Activated B cell treated with CpG ODN at 0.5 μM for 24 hours (primary cell): ENCODE measurements at regions of chr6 and their contacts with region 1.

Region 1: GRCh38 chr6:156890627-156891314 is 113.6 kb downstream of the ARID1B start:
- DNase-seq: no peak
- ATAC-seq: no peak
- H3K4me3 Mint-ChIP-seq: no peak overlapping the region
- H3K27ac Mint-ChIP-seq: no peak overlapping the region
- H3K4me1 Mint-ChIP-seq: peaks cover 68% of the 10 kb centered on the region
- H3K27me3 Mint-ChIP-seq: no peaks in the 10 kb centered on the region
- CTCF ChIP-seq: no peak

Region 2: DNA sequence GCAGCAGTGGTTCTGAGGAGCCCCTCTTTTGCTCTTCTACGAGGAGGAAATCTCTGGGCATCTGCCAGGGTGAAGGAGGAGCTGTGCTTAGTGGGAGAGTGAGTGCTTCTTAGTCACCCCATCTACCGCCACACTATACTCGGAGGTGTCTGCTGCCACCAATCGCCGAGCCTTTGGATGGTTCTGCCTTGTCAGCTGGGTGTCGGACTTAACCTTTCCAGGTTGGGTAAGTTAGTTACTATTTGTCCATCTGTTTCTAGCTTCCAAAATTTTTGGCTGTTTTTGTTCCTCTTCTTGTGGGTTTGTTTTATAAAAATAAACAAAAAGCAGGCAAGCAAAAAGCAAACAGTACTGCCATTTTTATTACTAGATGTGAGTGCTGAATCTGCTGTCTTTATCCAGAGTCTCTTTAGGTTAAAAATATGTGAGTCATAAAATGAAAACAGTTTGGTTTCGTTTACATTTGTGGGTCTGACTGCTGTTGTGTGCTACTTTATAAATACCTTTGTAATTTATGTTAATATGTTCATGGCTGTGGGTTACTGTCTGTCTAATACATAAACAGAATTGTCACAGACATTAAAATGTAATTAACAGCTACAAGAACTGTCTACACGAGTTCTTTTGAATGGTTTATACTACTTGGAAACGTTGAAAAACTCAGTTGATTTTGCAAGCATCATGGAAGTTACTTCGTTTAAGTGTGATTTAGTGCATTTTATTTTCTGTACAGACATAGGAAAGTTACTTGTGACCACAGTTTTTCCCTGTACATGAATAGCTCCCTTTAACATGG is 24.4 kb before region 1 on chr6:
- CTCF ChIA-PET with region 1: no interaction called
- POLR2A ChIA-PET with region 1: no interaction called
- intact Hi-C with region 1: no loop called
- DNase-seq: no peak
- ATAC-seq: peak; percentile 37
- H3K4me3 Mint-ChIP-seq: peak overlapping the region; percentile 67
- H3K27ac Mint-ChIP-seq: peak overlapping the region; percentile 38
- H3K4me1 Mint-ChIP-seq: peaks cover 93% of the 10 kb centered on the region
- H3K27me3 Mint-ChIP-seq: no peaks in the 10 kb centered on the region
- CTCF ChIP-seq: no peak

Region 3: DNA sequence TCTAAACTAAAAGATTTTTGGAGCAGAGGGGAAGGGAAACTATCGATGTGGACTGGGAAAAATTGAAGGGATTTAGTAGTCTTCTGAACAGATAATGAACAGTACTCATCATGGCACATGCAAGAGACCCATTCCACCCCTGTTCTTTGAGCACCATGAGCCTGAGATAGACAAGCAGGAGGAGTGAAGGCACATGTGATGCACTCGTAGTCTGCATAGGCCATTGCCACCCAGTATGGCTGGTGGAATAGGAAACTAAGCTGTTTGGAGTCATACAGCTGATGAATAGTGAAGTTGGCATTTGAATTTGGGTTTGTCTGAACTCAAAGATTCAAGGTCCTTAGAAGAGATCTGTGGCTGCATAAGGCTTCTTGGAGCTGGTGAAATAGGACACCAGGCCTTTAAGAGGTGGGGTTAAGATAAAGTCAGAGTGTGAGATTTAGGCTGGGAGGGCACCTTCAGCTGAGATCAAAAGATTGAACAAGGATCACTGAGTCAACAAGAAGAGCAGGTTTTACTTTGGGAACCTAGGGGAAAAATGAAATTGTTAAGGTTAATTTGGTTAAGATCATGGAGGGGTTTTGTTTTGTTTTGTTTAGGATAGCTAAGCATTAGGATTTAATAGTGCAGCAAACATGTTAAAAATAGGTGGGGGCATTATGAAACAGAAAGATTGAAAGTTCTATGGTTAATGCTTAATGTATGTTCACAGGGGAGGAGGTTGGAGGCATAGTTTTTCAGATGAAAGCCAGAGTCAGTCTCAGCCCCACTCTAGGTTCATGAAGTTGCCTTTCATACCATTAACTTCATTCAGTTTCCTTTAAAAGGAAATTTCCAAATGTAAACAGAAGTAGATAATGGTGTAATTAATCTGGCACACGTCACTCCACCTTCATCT is 35.2 kb after region 1 on chr6:
- CTCF ChIA-PET with region 1: no interaction called
- POLR2A ChIA-PET with region 1: no interaction called
- intact Hi-C with region 1: loop called (anchors 5 kb)
- DNase-seq: no peak
- ATAC-seq: no peak
- H3K4me3 Mint-ChIP-seq: no peak overlapping the region
- H3K27ac Mint-ChIP-seq: peak overlapping the region; percentile 10
- H3K4me1 Mint-ChIP-seq: peaks cover 68% of the 10 kb centered on the region
- H3K27me3 Mint-ChIP-seq: no peaks in the 10 kb centered on the region
- CTCF ChIP-seq: no peak